ENCODE measurements at regions of chr6 and their contacts with region 1.

Region 1: DNA sequence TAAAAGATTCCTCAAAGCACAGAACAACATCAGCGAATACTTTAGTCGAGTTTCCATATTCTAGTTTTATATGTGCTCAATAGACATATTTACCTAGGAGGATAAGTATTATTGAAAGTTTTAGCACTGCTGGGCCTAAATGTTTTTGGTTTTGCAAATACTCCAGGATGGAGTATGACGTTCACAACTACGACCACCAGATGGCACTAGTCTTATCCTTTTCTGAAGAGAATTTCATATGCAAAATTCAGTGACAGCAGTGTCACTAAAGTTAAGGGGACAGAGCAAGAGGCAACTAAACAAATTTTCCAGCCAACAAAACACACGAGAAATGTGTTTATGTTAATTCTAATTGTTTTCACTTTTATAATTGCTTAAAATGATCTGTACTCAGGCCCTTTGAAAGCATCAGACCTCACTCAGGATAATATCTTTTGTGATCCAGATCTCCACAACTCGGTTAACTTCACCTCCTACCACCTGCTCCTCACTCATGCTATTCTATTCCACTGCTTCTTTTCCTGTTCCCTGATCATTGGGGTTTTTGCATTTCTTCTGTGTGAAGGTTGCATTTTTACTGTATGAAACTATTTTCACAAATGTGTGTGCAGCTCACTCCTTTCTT is 220.8 kb downstream of the TRDN start:
- DNase-seq: peak in 4 of 6 donors; percentile 16 to 50 (median 18)
- ATAC-seq: peak in 3 of 4 donors; percentile 60 to 77 (median 68)
- H3K4me3 ChIP-seq: no peak overlapping the region
- H3K27ac ChIP-seq: no peak overlapping the region
- H3K4me1 ChIP-seq: no peaks in the 10 kb centered on the region
- H3K27me3 ChIP-seq: no peaks in the 10 kb centered on the region
- CTCF ChIP-seq: peak; percentile 45 to 67 (median 58)

Region 2: DNA sequence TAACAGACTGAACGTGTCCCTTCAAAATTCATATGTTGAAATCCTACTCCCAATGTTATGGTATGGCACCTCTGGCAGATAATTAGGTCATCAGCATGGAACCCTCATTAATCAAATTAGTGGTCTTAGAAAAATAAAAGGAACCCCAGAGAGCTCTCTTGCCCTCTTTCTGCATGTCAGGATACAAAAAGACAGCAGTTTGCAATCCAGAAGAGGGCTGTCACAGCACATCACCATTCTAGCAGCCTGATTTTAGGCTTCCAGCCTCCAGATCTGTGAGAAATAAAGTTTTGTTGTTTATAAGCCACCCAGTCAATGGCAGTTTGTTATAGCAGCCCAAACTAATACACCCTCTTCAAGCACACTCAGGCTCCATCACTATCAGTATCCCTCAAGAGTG is 72.1 kb before region 1 on chr6:
- intact Hi-C with region 1: no loop called
- DNase-seq: no peak
- ATAC-seq: no peak
- H3K4me3 ChIP-seq: no peak overlapping the region
- H3K27ac ChIP-seq: no peak overlapping the region
- H3K4me1 ChIP-seq: no peaks in the 10 kb centered on the region
- H3K27me3 ChIP-seq: no peaks in the 10 kb centered on the region
- CTCF ChIP-seq: no peak

Region 3: GRCh38 chr6:123668965-123669591 is 253.1 kb after region 1 on chr6:
- intact Hi-C with region 1: no loop called
- DNase-seq: no peak
- ATAC-seq: no peak
- H3K4me3 ChIP-seq: no peak overlapping the region
- H3K27ac ChIP-seq: no peak overlapping the region
- H3K4me1 ChIP-seq: no peaks in the 10 kb centered on the region
- H3K27me3 ChIP-seq: no peaks in the 10 kb centered on the region
- CTCF ChIP-seq: no peak

Region 4: DNA sequence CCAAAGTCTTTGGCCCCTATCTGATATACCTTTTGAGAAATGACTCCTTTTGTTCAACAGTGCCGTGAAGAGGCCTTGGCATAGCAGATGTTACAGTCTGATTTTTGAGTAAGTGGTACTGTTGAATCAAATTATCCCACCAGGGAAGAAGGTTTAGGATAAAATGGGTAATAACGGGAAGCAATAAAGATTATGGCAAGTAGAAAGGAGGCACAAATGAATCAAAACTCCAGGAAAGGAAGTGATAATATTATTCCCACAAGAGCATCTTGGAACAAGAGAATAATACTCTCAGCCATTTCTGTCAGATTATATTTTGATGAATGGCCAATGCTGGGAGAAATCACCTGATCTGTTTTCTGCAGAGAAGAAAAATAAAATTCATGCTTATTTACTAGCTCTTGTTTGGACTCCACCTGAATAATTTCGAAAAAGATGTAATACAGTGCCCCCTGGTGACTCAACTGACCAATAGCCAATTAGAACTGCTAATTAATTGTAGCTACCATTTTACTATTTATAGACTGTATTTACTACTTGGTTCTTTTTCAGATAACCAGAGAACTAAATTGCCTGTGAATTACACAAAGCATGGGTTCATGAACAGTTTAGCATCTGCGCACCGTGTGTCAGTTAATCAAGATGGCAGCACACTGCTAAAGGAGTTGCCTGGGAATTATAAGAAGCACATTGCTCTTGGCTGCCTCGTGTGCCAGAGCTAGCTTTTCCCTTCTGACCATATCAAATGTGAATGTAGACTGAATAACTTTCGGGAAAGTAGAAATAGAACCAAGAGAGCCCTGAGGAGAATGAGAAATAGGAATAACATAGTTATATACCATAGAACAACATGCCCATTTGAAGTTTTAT is 299.3 kb after region 1 on chr6:
- intact Hi-C with region 1: loop called in 2 of 3 experiments (anchors 5 kb)
- DNase-seq: peak in 1 of 6 donors; percentile 9
- ATAC-seq: peak in 3 of 4 donors; percentile 53 to 57 (median 55)
- H3K4me3 ChIP-seq: no peak overlapping the region
- H3K27ac ChIP-seq: no peak overlapping the region
- H3K4me1 ChIP-seq: no peaks in the 10 kb centered on the region
- H3K27me3 ChIP-seq: no peaks in the 10 kb centered on the region
- CTCF ChIP-seq: peak in 3 of 4 donors; percentile 28 to 38 (median 31)

Measured in pancreas (tissue), 10 donors.